ENCODE measurements at regions of chr1 and their contacts with region 1.

Region 1: DNA sequence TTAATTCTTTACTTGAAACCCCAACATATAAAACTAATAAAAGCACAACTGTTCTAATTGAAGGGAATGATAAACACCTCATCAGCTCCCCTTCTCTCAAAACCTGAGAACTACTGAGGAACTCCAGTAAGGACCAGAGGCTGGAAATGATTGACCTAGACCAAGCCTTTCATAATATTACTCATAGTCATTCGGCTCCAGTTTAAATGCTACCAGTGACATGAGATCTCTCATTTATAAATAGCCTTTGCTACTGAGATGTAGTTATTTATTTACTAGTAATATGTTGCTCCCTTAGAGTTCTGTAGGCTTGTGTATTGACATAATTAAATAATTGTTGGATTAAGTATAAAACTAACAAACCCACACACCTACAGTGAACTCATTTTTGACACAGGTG is 209.8 kb upstream of the PRMT6 start:
- DNase-seq: no peak
- ATAC-seq: no peak

Region 2: DNA sequence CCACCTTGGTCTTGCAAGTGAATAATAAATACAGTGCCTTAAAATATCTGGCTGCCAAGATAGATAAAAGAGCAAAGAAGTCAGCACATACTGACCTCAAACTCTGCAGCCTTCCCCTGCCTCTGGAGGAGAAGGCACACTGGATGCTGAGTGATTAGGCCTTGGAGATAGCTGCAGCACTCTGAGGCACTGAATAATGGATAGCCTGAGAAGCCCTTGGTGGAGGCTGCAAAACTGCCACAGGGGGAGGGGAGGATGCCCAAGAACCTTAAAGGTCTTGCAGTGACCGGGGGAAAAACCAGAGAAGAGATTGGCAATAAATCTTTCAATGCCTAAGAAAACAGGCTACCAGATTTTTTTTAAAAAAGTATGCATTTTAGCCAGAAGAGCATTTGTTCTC is 42.4 kb after region 1 on chr1:
- intact Hi-C with region 1: loop called (anchors 5 kb)
- DNase-seq: no peak
- ATAC-seq: no peak

Region 3: GRCh38 chr1:107162745-107163144 is 316.1 kb after region 1 on chr1:
- intact Hi-C with region 1: no loop called
- DNase-seq: no peak
- ATAC-seq: no peak

Region 4: GRCh38 chr1:107220036-107220435 is 373.4 kb after region 1 on chr1:
- intact Hi-C with region 1: no loop called
- DNase-seq: no peak
- ATAC-seq: no peak

Measured in sciatic nerve (tissue), 2 donors.